Heart right ventricle (tissue), 16 donors: ENCODE measurements at regions of chr22 and their contacts with region 1.

Region 1: DNA sequence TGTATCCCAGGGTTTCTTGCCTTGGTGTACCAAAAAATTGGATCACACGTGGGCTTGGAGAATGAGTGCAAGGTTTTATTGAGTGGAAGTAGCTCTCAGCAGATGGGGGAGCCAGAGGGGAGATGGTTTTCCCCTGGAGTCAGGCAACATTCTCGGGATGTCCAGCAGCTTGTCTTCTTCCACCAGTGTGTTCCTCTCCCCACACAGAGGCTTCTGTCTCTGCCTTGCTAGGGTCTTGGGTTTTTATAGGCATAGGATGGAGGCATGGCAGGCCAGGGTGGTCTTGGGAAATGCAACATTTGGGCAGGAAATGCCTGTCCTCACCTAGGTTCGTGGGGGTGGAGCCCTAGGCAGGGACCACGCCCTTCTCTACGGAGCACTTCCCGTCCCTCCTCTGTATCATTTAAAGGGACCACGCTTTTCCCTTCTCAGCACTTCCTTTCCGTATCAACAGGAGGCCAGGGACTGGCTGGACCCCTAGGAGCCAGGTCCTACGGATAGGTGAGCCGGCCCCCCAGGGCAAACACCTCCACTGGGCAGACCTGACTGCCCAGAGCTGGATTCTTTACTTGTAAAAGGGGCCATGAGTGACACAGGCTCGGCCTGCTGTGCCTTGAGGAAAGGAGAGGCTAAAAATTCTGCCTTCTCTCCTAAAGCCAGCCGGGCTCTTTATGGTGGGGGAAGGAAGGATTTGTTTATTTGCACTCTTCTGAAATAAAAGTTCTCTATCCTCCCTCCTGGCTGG is 55.3 kb upstream of the CCDC188 start:
- DNase-seq: peak; percentile 62 to 81
- ATAC-seq: peak; percentile 40 to 89 (median 82)
- H3K4me3 ChIP-seq: peak overlapping the region; percentile 38 to 76 (median 66)
- H3K27ac ChIP-seq: peak overlapping the region; percentile 72 to 96 (median 86)
- H3K4me1 ChIP-seq: peaks cover 33 to 59% (median 44%) of the 10 kb centered on the region in 9 donors
- H3K27me3 ChIP-seq: no peaks in the 10 kb centered on the region
- CTCF ChIP-seq: peak in 4 of 9 donors; percentile 11 to 28 (median 18)

Region 2: DNA sequence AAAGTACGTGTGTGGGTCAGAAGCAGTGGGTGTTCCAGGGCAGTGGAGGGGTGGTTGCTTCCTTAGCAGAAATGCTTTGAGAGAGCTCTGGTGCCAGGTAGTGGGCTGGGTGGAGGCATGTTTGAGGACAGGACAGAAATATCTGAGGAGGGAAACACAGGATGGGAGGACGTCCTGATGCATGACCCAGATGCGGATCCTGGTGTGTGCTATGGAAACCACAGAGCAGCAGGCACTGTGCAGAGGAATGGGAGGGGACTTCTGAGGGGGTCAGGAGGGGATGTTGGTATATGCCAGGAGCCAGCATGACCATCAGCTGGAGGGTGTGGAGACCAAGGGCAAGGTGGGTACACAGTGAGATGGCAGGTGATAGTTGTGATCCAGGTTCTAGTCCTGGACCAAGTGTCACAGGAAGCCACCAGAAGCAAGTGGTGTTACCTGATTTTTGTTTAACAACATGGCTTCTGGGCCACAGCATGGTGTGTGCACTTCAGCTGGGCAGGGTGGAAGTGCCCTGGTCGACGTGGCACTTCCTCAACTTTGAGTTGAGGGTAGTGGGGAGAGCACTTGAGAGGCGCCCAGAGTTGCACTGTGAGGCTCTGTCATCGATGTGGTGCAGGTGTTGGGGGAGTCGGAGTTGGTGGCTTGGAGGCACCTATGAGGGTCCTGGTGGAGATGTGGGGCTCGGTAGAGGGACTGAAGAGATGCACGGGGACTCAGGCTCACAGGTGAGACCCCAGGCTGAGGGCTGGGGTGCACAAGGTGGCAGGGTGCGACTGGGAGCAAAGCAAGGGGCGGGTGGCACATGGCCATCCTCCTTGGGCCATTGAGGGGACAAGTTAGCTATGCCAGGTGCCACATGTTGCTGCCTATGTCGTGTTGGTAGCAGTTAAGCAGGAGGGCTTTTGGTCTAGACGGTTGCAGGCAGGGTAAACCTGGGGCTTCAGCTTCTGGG is 118.5 kb before region 1 on chr22:
- intact Hi-C with region 1: no loop called
- DNase-seq: no peak
- ATAC-seq: no peak
- H3K4me3 ChIP-seq: no peak overlapping the region
- H3K27ac ChIP-seq: peak overlapping the region in 1 of 10 donors; percentile 10
- H3K4me1 ChIP-seq: peaks cover 20 to 32% (median 27%) of the 10 kb centered on the region in 9 donors
- H3K27me3 ChIP-seq: no peaks in the 10 kb centered on the region
- CTCF ChIP-seq: no peak

Region 3: DNA sequence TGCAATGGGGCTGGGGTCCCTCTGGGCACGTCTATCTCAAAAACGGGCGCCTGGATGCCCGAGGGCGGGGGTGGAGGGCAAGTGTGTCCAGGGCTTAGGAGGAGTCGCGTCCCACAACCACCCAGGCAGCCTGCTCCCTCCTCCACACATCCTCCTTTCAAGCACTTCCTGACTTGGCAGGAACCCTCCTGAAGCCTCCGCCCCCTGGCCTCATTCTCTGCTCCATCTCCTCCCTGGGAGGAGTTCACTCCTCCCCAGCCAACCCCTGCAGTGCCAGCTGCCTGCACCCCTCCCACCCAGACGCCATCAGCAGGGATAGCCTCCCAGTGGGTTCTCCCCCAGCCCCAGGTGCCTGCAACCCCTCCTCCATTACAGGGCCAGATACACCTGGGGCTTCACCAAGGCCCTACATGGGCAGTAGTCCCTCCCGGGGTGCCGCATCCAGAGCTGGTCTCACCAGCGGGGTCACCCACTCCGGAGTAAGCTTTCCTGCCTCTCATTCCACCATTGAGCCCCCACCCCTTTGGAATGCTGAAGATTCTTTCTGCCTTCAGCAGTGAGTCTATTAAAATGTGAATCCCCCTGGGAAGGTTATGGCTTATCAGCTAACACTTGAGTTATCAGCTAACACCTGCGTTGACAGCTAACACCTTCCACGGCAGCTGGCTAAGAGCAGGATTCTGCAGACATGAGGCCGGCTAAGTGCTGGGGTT is 37.6 kb after region 1 on chr22:
- intact Hi-C with region 1: loop called in 4 of 10 experiments (anchors 5 kb)
- DNase-seq: peak; percentile 71 to 84
- ATAC-seq: peak; percentile 66 to 81 (median 73)
- H3K4me3 ChIP-seq: peak overlapping the region in 7 of 10 donors; percentile 6 to 39 (median 29)
- H3K27ac ChIP-seq: peak overlapping the region in 8 of 10 donors; percentile 23 to 71 (median 52)
- H3K4me1 ChIP-seq: peaks cover 46 to 98% (median 56%) of the 10 kb centered on the region in 9 donors
- H3K27me3 ChIP-seq: no peaks in the 10 kb centered on the region
- CTCF ChIP-seq: no peak

Region 4: DNA sequence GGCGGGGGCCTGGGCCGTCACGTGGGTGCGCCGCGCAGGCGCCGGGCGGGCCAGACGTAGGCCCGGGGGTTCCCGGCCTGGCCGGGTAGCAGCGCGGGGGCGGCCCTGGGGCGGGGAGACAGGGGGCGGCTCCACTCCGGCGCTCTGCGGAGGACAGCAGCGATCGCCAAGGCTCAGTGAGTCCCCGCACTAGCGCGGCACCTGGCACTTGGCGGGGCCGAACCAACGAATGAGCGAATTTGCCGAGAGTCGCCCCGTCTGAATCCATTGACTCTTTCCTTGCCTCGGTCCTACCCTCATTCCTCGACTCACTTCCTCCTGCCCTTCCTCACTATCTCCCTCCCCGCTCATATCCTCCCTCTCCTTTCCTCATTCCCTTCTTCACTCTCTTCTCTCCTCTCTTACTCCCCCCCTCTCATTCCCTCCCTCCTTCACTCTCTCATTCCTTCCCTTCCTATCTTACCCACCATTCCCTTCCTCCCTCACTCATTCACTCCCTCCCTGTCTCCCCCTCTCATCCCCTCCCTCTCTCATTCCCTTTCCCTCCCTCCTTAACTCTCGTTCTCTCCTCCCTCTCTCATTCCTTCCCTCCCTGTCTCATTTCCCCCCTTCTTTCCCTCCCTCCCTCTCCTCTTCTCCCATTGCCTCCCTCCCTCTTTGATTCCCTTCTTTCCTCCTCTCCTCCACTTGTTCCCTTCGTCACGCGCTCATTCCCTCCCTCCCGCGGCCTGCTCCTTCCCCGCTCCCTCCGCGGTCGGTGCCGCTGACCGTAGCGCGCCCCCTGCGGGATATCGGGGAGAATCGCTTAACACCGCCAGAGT is 289.9 kb after region 1 on chr22:
- intact Hi-C with region 1: no loop called
- DNase-seq: peak; percentile 91 to 93
- ATAC-seq: peak; percentile 96 to 98 (median 97)
- H3K4me3 ChIP-seq: peak overlapping the region; percentile 61 to 86 (median 78)
- H3K27ac ChIP-seq: peak overlapping the region; percentile 68 to 97 (median 94)
- H3K4me1 ChIP-seq: peaks cover 2 to 28% (median 22%) of the 10 kb centered on the region in 9 donors
- H3K27me3 ChIP-seq: no peaks in the 10 kb centered on the region
- CTCF ChIP-seq: peak; percentile 83 to 96 (median 91)